Endothelial cell of umbilical vein (primary cell): ENCODE measurements at regions of chr5 and their contacts with region 1.

Region 1: DNA sequence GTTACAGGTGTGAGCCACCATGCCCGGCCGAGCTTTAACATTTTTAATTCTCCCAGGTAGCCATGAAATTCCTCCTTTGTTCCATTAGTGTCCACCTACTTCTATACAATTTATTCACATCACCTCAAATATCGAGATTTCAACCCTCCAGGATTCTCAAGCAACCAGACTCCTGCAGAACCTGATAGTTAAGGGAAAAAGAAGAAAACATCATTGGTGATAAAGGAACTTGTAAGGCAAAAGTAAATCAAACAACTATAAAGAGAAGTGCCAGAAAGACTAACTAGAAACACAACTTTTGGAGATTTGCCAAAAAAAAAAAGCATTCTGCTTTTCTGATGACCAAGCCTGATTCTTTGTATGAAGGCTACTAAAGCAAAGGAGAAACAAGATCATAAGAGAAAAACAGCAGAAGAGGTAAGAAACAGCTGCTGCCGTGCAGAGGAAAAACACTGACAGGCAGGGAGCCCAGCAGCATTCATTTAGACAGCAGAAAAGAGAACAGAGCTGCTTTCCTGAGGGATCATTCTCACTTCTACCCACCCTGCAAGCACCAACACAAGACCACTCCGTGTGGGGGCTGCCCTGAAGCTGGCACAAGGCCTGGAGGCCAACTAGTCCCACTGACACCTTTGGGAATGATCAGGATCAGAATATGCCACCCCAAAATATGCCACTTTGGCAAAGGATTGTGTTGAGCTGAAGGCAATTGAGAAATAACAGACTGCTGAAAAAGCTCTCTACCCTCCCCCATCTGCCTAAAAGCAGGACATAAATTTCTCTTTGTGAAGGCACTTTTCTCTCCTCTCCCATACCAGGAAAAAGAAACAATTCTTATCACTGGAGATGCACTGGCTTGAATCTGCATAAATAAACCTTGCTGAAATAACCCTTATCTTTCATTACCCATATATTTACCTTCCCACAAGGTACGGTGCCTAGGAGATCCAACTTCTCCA is 75.1 kb downstream of the ALDH7A1 start:
- DNase-seq: no peak
- H3K4me3 ChIP-seq: no peak overlapping the region
- H3K27ac ChIP-seq: no peak overlapping the region
- H3K4me1 ChIP-seq: no peaks in the 10 kb centered on the region
- H3K27me3 ChIP-seq: no peaks in the 10 kb centered on the region
- CTCF ChIP-seq: no peak
- POLR2A ChIP-seq: no peak

Region 2: GRCh38 chr5:126531543-126532120 is 11.7 kb after region 1 on chr5:
- CTCF ChIA-PET with region 1: interaction called, 11 read pairs
- POLR2A ChIA-PET with region 1: no interaction called
- dilution Hi-C with region 1: no loop called
- intact Hi-C with region 1: no loop called
- DNase-seq: no peak
- H3K4me3 ChIP-seq: no peak overlapping the region
- H3K27ac ChIP-seq: no peak overlapping the region
- H3K4me1 ChIP-seq: no peaks in the 10 kb centered on the region
- H3K27me3 ChIP-seq: peaks cover 0 to 2% of the 10 kb centered on the region in 2 experiments
- CTCF ChIP-seq: no peak
- POLR2A ChIP-seq: no peak